OCI-LY7 (cell line): ENCODE measurements at regions of chr20 and their contacts with region 1.

Region 1: DNA sequence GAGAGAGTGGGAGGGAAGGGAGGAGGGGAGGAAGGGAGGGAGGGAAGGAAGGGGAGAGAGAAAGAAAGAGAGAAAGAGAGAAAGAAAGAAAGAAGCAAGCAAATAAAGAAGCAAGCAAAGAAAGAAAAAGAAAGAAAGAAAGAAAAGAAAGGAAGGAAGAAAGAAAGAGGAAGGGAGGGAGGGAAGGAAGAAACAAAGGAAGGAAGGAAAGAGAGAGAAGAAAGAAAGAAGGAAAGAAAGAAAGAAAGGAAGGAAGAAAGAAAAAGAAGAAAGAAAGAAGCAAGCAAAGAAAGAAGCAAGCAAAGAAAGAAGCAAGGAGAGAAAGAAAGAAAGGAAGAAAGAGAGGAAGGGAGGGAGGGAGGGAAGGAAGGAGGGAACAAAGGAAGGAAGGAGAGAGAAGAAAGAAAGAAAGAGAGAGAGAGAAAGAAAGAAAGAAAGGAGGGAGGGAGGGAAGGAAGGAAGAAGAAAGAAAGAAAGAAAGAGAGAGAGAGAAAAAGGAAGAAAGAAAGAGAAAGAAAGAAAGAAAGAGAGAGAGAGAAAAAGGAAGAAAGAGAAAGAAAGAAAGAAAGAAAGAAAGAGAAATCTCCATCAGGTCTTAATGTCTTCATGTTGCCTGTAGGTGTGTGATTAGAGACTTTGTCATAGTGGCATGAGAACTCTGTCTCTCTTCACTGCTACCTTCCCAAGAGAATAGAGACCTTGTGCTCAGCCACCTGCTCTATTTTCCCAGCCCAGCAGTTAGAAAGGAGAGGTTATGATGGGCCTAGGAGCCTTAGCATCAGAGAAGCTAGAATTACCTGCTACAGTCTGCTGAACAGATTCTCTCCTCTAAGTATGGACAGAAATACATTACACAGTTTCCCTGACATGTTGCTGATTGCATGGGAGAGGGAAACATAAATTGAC is 5.0 kb downstream of the SEMG1 start:
- DNase-seq: no peak
- H3K4me3 ChIP-seq: no peak overlapping the region
- H3K27ac ChIP-seq: no peak overlapping the region
- H3K4me1 ChIP-seq: no peaks in the 10 kb centered on the region
- CTCF ChIP-seq: no peak

Region 2: GRCh38 chr20:44516491-44516890 is 695.3 kb before region 1 on chr20:
- CTCF ChIA-PET with region 1: no interaction called
- POLR2A ChIA-PET with region 1: no interaction called
- intact Hi-C with region 1: loop called (anchors 10 kb)
- DNase-seq: no peak
- H3K4me3 ChIP-seq: no peak overlapping the region
- H3K27ac ChIP-seq: no peak overlapping the region
- H3K4me1 ChIP-seq: peaks cover 22% of the 10 kb centered on the region
- CTCF ChIP-seq: no peak

Region 3: GRCh38 chr20:45111799-45112471 is 99.9 kb before region 1 on chr20:
- CTCF ChIA-PET with region 1: no interaction called
- POLR2A ChIA-PET with region 1: no interaction called
- intact Hi-C with region 1: no loop called
- DNase-seq: peak; percentile 61
- H3K4me3 ChIP-seq: no peak overlapping the region
- H3K27ac ChIP-seq: no peak overlapping the region
- H3K4me1 ChIP-seq: no peaks in the 10 kb centered on the region
- CTCF ChIP-seq: peak; percentile 82

Region 4: GRCh38 chr20:46978951-46979491 is 1767.2 kb after region 1 on chr20:
- CTCF ChIA-PET with region 1: no interaction called
- POLR2A ChIA-PET with region 1: no interaction called
- intact Hi-C with region 1: no loop called
- DNase-seq: no peak
- H3K4me3 ChIP-seq: no peak overlapping the region
- H3K27ac ChIP-seq: no peak overlapping the region
- H3K4me1 ChIP-seq: peaks cover 21% of the 10 kb centered on the region
- CTCF ChIP-seq: no peak